KBM-7 (cell line): ENCODE measurements at regions of chr4 and their contacts with region 1.

Region 1: DNA sequence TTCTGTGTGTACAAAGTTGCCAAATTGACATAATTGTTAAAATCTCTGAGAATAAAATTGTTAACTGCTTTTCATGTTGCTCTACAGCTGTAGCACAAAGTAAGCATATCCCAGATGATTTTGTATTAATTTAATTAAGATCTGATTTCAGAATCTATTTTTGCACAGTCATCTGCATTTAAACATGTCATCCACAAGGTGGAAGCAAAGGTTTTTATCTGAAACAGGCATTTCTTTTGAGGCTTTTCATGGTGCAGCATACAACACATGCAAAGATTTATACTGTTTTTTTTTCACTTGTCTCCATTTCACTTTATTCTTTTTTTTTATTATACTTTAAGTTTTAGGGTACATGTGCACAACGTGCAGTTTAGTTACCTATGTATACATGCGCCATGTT is 51.2 kb downstream of the GC start:
- DNase-seq: peak; percentile 13

Region 2: GRCh38 chr4:72295966-72296557 is 563.4 kb after region 1 on chr4:
- in situ Hi-C with region 1: loop called (anchors 25 kb)
- DNase-seq: peak; percentile 63